ENCODE measurements at regions of chr16 and their contacts with region 1.

Region 1: GRCh38 chr16:788394-789126 is at the start of gene CHTF18:
- DNase-seq: peak; percentile 95
- H3K4me3 ChIP-seq: peak within 1 kb of the TSS; percentile 72
- H3K27ac ChIP-seq: peak within 1 kb of the TSS; percentile 83
- H3K4me1 ChIP-seq: peaks cover 8% of the 10 kb centered on the region
- H3K27me3 ChIP-seq: peaks cover under 1% of the 10 kb centered on the region
- CTCF ChIP-seq: no peak
- total RNA-seq, gene CHTF18: 124 and 125 TPM in 2 replicates

Region 2: DNA sequence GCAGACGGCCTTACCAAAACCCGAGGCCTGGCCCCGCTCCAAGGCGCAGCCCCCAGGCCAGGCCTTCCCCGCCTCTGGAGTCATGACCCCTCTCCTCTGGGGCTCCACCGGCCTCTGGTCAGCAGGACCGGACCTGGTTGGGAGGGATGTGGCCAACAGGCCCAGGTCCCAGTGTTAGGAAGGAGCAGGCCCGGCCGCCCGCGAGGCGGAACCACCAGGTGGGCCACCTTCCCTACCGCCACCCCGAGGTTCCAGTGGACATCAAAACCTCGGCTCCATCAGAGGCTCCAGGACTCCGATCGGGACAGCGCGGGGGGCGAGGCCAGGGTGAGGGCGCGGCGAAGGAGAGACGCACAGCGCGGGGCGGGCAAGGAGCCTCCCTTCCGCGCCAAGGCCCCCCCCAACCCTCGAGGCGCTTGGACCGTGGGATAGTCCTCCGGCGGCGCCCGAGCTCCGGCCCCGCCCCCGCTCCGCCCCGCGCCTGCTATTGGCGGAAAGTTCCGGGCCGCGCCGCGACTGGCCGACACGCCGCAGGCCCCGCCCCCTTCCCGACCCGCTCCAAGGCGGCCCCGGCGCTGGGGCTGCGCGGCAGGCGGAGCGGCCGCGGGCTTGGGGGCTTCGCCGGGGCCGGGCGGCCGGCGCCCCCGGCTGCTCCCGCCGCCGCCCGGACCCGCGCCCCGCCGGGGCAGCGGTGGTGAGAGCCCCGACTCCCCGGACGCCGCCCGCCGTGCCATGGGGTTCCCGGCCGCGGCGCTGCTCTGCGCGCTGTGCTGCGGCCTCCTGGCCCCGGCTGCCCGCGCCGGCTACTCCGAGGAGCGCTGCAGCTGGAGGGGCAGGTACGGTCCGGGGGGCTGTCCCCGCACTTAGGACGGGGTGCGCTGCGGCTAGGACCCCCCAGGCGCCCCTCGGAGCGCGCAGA is 73.7 kb before region 1 on chr16 and contains the start of gene METRN:
- CTCF ChIA-PET with region 1: interaction called, 5 read pairs
- POLR2A ChIA-PET with region 1: no interaction called
- intact Hi-C with region 1: loop called (anchors 5 kb)
- DNase-seq: peak; percentile 92
- H3K4me3 ChIP-seq: peak within 1 kb of the TSS; percentile 32
- H3K27ac ChIP-seq: no peak within 1 kb of the TSS
- H3K4me1 ChIP-seq: peaks cover 2% of the 10 kb centered on the region
- H3K27me3 ChIP-seq: peaks cover 32% of the 10 kb centered on the region
- CTCF ChIP-seq: no peak
- total RNA-seq, gene METRN: 0.86 and 1.8 TPM in 2 replicates

Measured in A673 (cell line).